Activated T-helper 1 cell treated with anti-CD3 and anti-CD28 coated beads, Interleukin-12 subunit alpha, Interleukin-12 subunit beta, Interleukin-2, Interleukin-4 antibody, amounts not matched to agents 30 ng/mL and 10 ng/mL and 1 ng/mL, durations not matched to agents 14 hours and 24 hours and 36 hours (primary cell): ENCODE measurements at regions of chr6 and their contacts with region 1.

Region 1: DNA sequence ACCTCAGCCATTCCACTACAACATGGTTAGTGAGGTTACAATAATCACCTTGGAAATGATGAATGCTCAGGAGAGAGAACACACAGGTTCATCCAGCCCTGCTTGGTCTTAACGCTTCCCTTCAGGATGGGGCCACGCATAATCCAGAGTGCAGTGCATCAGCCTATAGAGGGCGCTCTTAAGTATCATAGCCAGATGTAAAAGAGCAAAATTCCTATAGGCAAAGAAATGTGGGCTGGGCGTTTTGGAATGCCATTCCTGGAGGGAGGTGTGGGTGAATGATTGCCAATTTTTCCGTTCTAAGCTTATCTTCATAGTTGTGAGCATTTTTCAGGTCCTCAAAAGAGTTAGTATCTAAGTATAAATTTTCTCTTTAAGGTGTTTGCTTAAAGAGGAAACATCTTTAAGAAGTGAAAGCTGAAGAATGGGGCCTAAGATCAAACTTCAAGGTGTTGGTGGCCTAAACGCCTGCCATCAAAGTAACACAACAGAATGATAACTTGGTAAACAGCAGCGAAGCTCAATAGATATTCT is 1.8 kb downstream of the RIPOR2 start:
- DNase-seq: no peak
- H3K4me3 Mint-ChIP-seq: peak overlapping the region; percentile 97
- H3K27ac Mint-ChIP-seq: peak overlapping the region; percentile 96
- H3K4me1 Mint-ChIP-seq: peaks cover 91% of the 10 kb centered on the region
- H3K27me3 Mint-ChIP-seq: no peaks in the 10 kb centered on the region

Region 2: DNA sequence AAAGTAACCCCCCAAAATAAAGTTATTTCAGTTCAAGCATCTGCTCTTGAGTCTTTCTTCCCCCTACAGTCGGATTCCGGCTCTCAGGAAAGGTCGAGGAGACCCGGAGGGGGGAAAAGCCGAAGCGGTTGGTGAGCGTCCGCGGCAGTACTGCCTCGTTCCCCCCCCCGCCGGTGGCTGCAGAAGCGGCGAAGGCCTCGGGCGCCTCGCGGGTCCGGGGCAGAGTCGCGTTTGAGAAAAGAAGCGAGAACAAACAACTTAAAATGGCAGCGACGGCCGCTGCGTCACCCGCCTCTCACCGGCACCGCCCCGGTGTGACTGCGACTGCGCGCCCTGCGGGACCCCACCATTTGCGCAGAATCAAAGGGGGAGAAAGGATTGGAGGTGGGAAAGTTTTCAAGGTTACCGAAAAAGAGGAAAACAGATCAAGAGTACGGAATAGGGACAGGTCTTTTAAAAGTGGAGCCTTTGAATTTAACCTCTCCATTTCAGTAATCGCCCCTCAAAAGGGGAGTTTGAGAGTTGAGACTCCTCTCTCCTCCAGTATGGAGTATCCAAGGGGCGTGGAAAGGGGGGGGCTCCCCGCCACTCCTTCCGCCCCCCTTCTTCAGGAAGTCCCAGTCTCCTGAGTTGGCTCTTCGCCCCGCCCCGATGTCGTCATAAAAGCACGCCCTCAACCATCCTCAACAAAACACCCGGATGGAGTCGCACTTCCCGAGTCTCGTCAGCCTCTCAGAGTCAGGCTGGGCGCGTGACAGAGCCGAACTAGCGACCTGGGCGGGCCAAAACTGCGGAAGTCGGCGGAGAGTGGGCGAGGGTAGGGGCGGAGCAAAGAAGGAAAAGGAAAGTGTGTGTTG is 213.1 kb before region 1 on chr6:
- intact Hi-C with region 1: loop called (anchors 1 kb)
- DNase-seq: peak; percentile 100
- H3K4me3 Mint-ChIP-seq: peak overlapping the region; percentile 100
- H3K27ac Mint-ChIP-seq: peak overlapping the region; percentile 96
- H3K4me1 Mint-ChIP-seq: peaks cover 47% of the 10 kb centered on the region
- H3K27me3 Mint-ChIP-seq: no peaks in the 10 kb centered on the region

Region 3: GRCh38 chr6:24861934-24862333 is 72.0 kb before region 1 on chr6:
- intact Hi-C with region 1: no loop called
- DNase-seq: no peak
- H3K4me3 Mint-ChIP-seq: no peak overlapping the region
- H3K27ac Mint-ChIP-seq: peak overlapping the region; percentile 18
- H3K4me1 Mint-ChIP-seq: peaks cover 85% of the 10 kb centered on the region
- H3K27me3 Mint-ChIP-seq: no peaks in the 10 kb centered on the region

Region 4: GRCh38 chr6:24883618-24884017 is 50.3 kb before region 1 on chr6:
- intact Hi-C with region 1: loop called (anchors 1 kb)
- DNase-seq: no peak
- H3K4me3 Mint-ChIP-seq: peak overlapping the region; percentile 66
- H3K27ac Mint-ChIP-seq: peak overlapping the region; percentile 91
- H3K4me1 Mint-ChIP-seq: peaks cover 79% of the 10 kb centered on the region
- H3K27me3 Mint-ChIP-seq: no peaks in the 10 kb centered on the region

Region 5: DNA sequence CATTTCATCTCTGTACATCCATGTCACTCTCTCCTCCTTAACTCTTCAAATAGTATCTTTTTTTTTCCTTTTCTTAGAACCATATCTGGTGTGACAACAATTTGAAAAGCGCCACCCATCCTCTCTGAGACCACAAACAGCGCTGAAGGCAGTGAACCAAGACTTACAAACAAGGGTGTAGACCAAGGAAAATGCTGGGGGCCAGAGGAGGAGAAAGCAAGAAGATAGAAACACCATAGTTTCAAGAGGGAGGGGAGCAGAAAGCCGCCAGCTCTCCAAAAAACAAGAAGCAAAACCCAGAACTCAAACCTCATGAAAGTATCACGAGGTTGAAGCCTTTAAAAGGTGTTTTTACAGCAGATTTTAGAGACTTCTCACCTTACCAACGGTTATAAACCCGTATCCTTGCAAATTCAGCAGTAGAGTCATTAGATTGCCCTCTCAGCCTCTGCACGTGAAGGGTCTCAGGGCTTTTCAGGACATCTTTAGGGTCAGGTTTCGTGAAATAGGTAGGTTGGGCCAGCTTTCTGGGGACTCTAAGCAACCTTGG is 15.2 kb after region 1 on chr6:
- intact Hi-C with region 1: loop called (anchors 1 kb)
- DNase-seq: peak; percentile 68
- H3K4me3 Mint-ChIP-seq: peak overlapping the region; percentile 65
- H3K27ac Mint-ChIP-seq: peak overlapping the region; percentile 95
- H3K4me1 Mint-ChIP-seq: peaks cover 76% of the 10 kb centered on the region
- H3K27me3 Mint-ChIP-seq: no peaks in the 10 kb centered on the region

Region 6: DNA sequence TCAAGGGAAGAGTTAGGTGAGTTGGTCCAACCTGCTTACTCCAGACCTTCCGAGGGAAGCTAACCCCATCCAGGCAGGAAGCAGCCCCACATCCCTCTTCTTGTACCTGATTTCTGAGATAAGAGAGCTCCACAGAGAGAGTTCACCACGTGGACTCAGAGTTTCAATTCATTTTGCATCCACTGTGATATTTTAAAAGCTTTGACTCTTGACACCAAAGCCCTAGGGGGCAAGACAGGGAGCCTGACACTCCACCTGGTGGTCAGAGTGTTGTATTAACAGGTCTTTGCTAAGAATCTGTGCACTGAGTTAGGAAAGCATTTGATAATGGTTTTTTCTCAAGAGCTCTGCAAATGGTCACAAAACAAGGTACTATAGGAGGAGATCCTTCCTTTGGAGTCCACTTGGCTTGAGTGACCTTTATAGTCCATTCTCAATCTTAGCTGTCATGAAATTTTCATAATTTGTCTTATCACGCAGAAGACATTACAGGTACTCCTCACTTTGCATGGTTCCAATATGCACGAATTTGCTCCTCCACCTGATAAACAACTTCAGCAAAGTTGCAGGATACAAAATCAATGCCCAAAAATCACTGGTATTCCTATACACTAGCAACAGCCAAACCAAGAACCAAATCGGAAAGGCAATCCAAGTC is 58.0 kb after region 1 on chr6:
- intact Hi-C with region 1: loop called (anchors 1 kb)
- DNase-seq: peak; percentile 71
- H3K4me3 Mint-ChIP-seq: peak overlapping the region; percentile 21
- H3K27ac Mint-ChIP-seq: peak overlapping the region; percentile 80
- H3K4me1 Mint-ChIP-seq: peaks cover 40% of the 10 kb centered on the region
- H3K27me3 Mint-ChIP-seq: no peaks in the 10 kb centered on the region

Region 7: GRCh38 chr6:25042036-25042521 is 108.1 kb after region 1 on chr6:
- intact Hi-C with region 1: loop called (anchors 1 kb)
- DNase-seq: peak; percentile 30
- H3K4me3 Mint-ChIP-seq: peak overlapping the region; percentile 88
- H3K27ac Mint-ChIP-seq: peak overlapping the region; percentile 95
- H3K4me1 Mint-ChIP-seq: peaks cover 66% of the 10 kb centered on the region
- H3K27me3 Mint-ChIP-seq: no peaks in the 10 kb centered on the region

Region 8: DNA sequence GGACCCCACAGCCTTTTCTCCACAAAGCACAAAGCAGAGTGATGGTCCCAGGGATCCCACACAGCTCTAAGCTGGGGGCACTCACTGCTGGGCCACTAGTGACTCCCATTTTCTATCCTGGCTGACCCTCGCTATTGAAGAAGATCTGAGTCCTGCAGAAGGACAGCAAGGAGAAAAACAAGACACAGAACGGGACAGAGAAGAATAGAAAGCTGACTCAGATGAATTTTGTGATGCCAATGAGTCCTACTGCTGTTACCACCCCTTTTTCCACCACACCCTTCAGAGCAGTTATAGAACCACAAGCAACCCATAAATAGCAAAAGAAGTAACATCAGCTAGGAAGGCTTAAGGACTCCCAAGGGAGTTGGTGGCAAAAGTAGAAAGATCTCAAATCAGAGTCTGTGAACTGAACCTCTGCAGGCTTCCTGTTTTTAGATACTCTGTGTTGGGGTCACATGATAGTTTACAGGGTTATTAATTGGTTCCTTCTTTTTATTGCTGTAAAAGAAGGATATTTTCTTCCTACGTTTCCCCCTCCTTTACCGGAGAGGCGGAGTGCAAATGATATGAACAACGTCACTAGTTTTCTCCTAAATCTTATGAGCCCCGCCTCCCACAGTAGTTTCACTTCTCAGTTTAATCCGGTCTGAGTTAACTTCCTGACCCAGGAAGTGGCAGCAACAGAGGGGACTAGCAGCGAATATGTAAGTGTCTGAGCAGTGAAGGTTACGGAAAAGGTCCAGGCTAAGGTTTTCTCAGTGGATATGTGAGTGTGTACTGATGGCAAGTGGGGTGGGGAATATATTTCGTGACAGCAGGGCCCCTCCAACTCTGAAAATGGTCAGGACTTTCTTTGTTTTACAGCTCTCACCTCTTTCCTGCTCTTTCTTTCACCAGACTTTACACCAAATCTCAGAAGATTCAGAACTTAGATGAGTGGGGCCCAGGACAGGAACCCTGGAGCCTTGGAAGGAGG is 1028.5 kb after region 1 on chr6 and contains the start of gene TRIM38:
- intact Hi-C with region 1: loop called (anchors 10 kb)
- DNase-seq: peak; percentile 76
- H3K4me3 Mint-ChIP-seq: peak within 1 kb of the TSS; percentile 94
- H3K27ac Mint-ChIP-seq: peak within 1 kb of the TSS; percentile 95
- H3K4me1 Mint-ChIP-seq: peaks cover 85% of the 10 kb centered on the region
- H3K27me3 Mint-ChIP-seq: no peaks in the 10 kb centered on the region
- total RNA-seq, gene TRIM38: 24.5 and 25.3 TPM in 2 replicates